ENCODE measurements at regions of chr11 and their contacts with region 1.

Region 1: GRCh38 chr11:94171693-94172440 is 43.2 kb downstream of the PANX1 start:
- DNase-seq: peak; percentile 50
- ATAC-seq: peak; percentile 41; the same call in 1 of the 2 replicates
- H3K4me3 ChIP-seq: no peak overlapping the region
- H3K27ac ChIP-seq: no peak overlapping the region
- H3K4me1 ChIP-seq: peaks cover 9% of the 10 kb centered on the region
- H3K27me3 ChIP-seq: no peaks in the 10 kb centered on the region
- CTCF ChIP-seq: peak; percentile 80
- POLR2A ChIP-seq: no peak
- RAD21 ChIP-seq: peak; percentile 81

Region 2: DNA sequence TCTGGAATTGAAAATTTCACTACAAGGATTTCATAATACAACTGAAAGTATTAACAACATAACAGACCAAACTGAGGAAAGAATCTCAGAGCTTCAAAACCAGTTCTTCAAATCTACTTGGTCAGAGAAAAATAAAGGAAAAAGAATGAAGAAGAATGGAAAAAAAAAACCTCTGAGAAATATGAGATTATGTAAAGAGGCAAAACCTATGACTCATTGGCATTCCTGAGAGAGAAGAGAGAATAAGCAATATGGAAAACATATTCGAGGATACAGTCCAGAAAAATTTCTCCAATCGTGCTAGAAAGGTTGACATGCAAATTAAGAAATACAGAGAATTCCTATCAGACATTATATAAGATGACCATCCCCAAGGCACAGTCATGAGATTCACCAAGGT is 252.8 kb after region 1 on chr11:
- CTCF ChIA-PET with region 1: no interaction called
- POLR2A ChIA-PET with region 1: no interaction called
- dilution Hi-C with region 1: no loop called
- in situ Hi-C with region 1: loop called (anchors 10 kb)
- intact Hi-C with region 1: no loop called
- DNase-seq: peak; percentile 41
- ATAC-seq: 0 out of 2 replicates have a peak, but pooled peaks have one; percentile 21
- H3K4me3 ChIP-seq: no peak overlapping the region
- H3K27ac ChIP-seq: no peak overlapping the region
- H3K4me1 ChIP-seq: peaks cover 3% of the 10 kb centered on the region; the same call in 1 of the 2 replicates
- H3K27me3 ChIP-seq: no peaks in the 10 kb centered on the region
- CTCF ChIP-seq: no peak
- POLR2A ChIP-seq: no peak
- RAD21 ChIP-seq: no peak

Region 3: DNA sequence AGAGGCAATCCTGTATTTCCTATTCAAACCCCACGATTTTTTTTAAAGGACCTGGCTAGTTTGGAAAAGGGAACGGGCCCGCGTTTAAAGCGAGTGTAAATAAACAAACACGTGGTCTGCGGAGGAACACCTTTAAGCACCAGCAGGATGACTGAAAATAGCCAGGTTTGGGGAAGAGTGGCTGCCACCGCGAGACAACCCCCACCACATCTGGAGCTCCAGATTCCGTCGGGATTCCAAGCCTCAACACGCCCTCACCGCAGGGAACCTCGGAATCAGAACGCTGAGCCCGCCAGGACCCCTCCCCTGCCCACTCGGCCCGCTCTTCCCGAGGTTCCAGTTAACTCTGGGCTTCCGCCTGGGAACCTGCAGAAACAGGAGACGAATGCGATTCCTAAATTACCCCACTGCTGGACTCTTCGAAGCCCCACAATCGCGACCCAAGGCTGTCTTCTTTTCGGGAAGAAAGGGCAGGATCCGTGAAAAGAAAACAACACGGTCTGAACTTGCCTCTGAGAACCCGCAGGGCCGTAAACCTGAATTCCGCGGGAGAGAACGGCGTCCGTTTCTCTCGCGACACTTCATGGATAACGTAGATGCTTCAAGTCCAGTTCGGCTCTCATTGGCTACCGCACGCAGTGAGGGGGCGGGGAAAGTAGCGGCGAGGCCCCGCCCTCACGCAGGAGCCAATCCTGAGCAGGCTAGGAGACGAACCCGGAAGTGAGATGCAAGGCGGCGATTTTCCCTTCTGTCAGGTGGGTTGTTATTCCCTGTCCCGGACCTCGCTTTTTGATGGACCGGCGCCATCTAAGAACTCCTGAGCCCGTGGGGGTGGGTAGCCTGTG is 321.6 kb after region 1 on chr11 and contains the starts of genes ANKRD49 and MRE11:
- CTCF ChIA-PET with region 1: no interaction called
- POLR2A ChIA-PET with region 1: no interaction called
- dilution Hi-C with region 1: no loop called
- in situ Hi-C with region 1: no loop called
- intact Hi-C with region 1: loop called (anchors 2 kb)
- DNase-seq: peak; percentile 98
- ATAC-seq: peak; percentile 100
- H3K4me3 ChIP-seq: peak within 1 kb of the TSS; percentile 77
- H3K27ac ChIP-seq: peak within 1 kb of the TSS; percentile 60
- H3K4me1 ChIP-seq: no peaks in the 10 kb centered on the region
- H3K27me3 ChIP-seq: no peaks in the 10 kb centered on the region
- CTCF ChIP-seq: no peak
- POLR2A ChIP-seq: peak; percentile 68; the same call in 1 of the 2 replicates
- RAD21 ChIP-seq: no peak
- total RNA-seq, gene ANKRD49: 10.4 and 15.8 TPM in 2 replicates
- total RNA-seq, gene MRE11: 15.6 and 22.2 TPM in 2 replicates

Region 4: GRCh38 chr11:94504689-94505293 is 332.9 kb after region 1 on chr11:
- CTCF ChIA-PET with region 1: no interaction called
- POLR2A ChIA-PET with region 1: no interaction called
- dilution Hi-C with region 1: no loop called
- in situ Hi-C with region 1: loop called (anchors 5 kb)
- intact Hi-C with region 1: no loop called
- DNase-seq: peak; percentile 68
- ATAC-seq: peak; percentile 67
- H3K4me3 ChIP-seq: no peak overlapping the region
- H3K27ac ChIP-seq: no peak overlapping the region
- H3K4me1 ChIP-seq: no peaks in the 10 kb centered on the region
- H3K27me3 ChIP-seq: no peaks in the 10 kb centered on the region; the same call in 1 of the 2 replicates
- CTCF ChIP-seq: peak; percentile 75
- POLR2A ChIP-seq: no peak
- RAD21 ChIP-seq: peak; percentile 78